ENCODE measurements at regions of chr15 and their contacts with region 1.

Region 1: GRCh38 chr15:89673165-89673512 is 6.0 kb downstream of the PLIN1 start:
- DNase-seq: peak; percentile 87

Region 2: DNA sequence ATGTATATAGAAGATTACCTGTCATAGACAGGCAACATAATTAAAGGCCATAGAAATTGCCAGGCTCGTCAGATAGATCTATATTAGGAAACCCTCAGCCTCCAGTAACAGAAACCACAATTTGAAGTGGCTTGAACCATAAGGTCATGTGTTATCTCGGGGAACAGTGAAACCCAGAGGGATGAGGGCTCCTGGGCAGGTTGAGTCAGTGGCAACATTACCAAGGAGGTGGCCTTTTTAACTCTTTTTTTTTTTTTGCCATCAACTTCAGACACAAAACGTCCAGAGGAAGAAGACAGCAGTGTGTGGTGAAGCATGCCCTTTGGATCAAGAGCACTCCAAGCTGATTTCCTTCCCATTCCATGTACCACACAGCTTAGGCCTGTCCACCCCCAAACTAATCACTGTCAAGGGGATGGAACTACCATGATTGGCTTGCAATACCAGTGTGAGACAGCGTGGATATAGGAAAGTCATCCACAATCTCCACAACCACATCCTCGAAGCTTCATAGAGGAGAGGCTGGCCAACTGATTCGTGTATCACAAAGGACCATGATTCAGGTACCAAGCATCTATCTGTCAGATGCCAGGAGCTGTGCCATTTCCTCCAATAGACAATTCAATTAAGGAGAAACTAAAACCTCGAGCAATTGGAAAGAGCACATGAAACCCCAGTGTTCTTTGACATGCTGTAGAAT is 16.9 kb before region 1 on chr15:
- CTCF ChIA-PET with region 1: interaction called, 17 read pairs
- POLR2A ChIA-PET with region 1: interaction called, 4 read pairs
- DNase-seq: no peak

Region 3: DNA sequence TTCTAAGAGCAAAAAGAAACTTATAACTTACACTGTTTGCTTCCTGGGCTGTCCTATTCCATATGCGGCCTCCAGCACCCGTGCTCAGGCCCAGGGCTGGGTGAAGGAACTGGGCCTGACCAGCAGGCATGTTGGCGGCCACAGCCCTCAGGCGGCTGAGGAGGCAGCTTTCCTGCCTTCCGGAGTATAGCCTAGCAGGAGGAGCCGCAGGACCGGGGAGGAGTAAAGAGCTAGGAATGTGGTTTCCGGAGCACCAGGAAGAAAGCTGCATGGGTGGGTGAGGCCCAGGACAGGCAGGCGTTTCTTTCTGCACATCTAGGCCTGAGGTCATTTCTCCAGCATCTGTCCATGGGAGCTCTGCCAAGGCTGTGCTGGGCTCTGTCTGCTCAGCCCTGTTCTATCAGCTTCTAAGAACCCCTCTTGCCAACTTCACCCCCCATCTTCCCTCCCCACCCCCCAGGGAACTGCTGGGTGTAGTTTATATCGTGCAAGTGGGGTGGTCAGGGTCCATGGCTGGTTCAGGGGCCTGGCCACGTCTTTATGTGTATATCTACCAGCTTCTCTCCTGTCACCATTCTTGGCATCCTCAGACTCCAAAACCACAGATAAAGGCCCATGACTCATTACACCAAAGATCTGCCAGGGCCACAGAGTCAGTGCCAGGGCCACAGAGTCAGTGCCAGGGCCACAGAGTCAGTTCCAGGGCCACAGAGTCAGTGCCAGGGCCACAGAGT is 10.1 kb before region 1 on chr15:
- CTCF ChIA-PET with region 1: interaction called, 17 read pairs
- POLR2A ChIA-PET with region 1: interaction called, 4 read pairs
- DNase-seq: no peak

Measured in HEK293T (cell line).